Activated T-helper 1 cell treated with anti-CD3 and anti-CD28 coated beads, Interleukin-12 subunit alpha, Interleukin-12 subunit beta, Interleukin-2, Interleukin-4 antibody, amounts not matched to agents 30 ng/mL and 10 ng/mL and 1 ng/mL, durations not matched to agents 14 hours and 24 hours and 36 hours (primary cell): ENCODE measurements at regions of chr9 and their contacts with region 1.

Region 1: DNA sequence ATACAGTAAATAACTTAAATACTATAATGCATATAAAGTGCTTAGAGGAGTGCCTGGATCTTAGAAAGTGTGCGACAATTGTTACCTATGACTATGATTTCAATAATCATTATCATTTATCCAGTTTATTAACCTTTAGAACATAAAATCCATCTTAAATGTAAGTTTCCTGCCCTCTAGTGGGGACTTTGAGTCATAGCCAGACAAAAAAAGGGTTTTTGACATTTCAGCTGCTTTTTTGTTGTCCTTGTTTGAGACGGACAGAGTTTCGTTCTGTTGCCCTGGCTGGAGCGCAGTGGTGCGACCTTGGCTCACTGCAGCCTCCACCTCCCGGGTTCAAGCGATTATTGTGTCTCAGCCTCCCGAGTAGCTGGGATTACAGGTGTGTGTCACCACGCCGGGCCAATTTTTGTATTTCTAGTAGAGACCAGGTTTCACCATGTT is 9.7 kb upstream of the C9orf152 start:
- DNase-seq: no peak
- H3K4me3 Mint-ChIP-seq: no peak overlapping the region
- H3K27ac Mint-ChIP-seq: no peak overlapping the region
- H3K4me1 Mint-ChIP-seq: peaks cover 6% of the 10 kb centered on the region
- H3K27me3 Mint-ChIP-seq: peaks cover 15% of the 10 kb centered on the region

Region 2: GRCh38 chr9:109574068-109574882 is 643.4 kb before region 1 on chr9:
- intact Hi-C with region 1: loop called (anchors 1 kb)
- DNase-seq: peak; percentile 14
- H3K4me3 Mint-ChIP-seq: no peak overlapping the region
- H3K27ac Mint-ChIP-seq: no peak overlapping the region
- H3K4me1 Mint-ChIP-seq: no peaks in the 10 kb centered on the region
- H3K27me3 Mint-ChIP-seq: peaks cover 19% of the 10 kb centered on the region

Region 3: DNA sequence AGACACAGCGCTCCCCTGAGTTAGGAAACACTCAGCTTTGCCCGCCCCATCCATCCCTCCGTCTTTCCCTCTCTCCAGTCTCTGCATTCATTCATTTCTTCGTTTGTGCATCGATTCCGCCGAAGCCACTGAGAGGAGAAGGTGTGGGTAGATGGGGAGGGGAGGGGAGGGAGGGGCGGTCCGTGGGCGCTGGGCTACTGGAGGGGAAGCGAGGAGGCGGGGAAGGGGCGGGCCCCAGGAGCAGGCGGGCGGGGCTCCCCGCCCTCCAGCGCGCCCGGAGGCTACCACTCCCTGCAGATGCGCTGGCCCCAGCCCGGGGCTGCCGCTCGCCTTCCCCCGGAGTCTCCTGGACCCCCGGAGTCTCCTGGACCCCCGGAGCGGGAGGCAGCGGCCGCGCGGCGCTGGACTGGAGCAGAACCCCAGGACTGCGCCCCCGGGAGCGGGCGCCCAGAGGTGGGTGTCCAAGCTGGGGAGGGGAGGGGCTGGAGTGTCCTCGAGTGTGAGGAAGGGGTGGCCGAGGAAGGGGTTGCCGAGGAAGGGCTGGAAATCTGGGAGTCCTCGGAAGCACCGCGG is 169.2 kb before region 1 on chr9:
- intact Hi-C with region 1: loop called (anchors 5 kb)
- DNase-seq: peak; percentile 81
- H3K4me3 Mint-ChIP-seq: peak overlapping the region; percentile 93
- H3K27ac Mint-ChIP-seq: peak overlapping the region; percentile 89
- H3K4me1 Mint-ChIP-seq: peaks cover 58% of the 10 kb centered on the region
- H3K27me3 Mint-ChIP-seq: no peaks in the 10 kb centered on the region

Region 4: DNA sequence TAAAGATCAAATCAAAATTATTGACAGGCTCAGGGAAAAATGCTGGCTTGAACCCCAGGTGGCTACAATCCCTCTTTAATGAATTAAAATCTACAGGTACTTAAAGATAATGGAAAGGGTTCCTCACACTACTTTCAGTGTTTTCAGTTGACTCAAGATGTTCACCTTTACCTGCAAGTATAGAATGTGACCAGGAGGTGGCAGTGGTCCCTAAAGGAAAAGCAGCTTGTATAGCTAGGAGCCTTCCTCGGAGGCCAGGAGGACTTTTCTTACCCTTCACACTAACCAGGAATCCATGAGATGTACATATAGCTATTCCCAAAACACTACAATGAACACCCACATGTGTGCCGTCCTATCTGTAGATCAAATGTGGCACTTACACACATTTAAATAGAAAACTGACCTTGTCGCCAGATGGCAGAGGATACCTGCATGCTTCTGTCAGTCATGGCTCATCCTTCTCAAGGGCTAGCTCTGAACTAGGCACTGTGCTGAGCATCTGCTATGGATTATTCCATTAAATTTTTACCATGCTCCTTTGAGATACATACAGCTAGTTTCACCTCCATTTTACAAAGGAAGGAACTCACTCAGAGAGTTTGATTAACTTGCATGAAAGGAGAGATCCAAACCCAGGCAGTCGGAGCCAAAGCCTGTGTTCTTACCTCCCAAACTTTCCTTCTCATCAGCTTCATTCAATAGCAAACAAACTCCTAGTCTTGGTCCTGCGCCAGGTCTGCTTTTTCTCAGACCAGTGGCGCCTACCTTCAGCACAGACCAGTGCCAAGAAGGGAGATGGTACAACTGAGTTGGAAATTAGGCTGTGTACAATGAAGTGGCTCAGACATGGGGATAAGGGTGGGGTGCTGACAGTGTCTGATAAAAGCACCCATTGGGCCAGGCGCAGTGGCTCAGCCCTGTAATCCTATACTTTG is 34.2 kb before region 1 on chr9:
- intact Hi-C with region 1: loop called (anchors 1 kb)
- DNase-seq: peak; percentile 44
- H3K4me3 Mint-ChIP-seq: no peak overlapping the region
- H3K27ac Mint-ChIP-seq: no peak overlapping the region
- H3K4me1 Mint-ChIP-seq: peaks cover 20% of the 10 kb centered on the region
- H3K27me3 Mint-ChIP-seq: peaks cover 3% of the 10 kb centered on the region